Activated CD4-positive, alpha-beta T cell treated with anti-CD3 and anti-CD28 coated beads for 36 hours (primary cell): ENCODE measurements at regions of chr16 and their contacts with region 1.

Region 1: DNA sequence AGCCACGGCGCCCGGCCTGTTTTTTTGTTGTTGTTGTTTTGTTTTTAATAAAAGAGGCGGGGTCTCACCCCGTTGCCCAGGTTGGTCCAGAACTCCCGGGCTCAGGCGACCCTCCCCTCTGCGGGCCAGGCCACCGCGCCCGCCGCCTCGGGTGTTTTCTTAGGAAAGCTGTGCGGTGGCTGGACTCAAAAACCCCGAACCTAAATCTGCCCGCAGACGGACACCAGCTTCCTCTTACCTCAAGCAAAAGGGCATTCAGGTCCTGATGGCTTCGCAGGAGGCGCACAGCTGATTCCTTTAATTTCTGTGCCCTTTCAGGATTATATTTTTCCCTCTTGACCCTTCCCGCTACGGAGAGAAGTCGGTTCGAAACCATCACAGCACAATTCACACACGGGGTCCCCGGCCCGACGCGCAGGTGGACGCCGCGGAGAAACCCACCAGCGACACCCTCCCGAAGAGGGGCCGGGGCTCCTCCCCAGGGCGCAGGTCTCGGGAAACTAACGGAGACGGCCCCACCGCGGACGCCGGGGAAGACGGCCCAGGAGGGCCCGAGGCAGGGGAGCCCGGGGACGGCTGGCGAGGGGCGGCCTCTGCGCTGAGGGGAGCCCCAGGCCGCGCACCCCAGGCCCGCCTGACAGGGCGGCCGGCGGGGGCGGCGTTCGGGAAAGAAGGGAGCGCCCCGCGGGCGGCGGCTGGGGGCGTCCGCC is 653 bp downstream of the FANCA start:
- DNase-seq: peak; percentile 43
- ATAC-seq: peak; percentile 21
- H3K4me3 Mint-ChIP-seq: peak overlapping the region; percentile 89
- H3K27ac Mint-ChIP-seq: peak overlapping the region; percentile 67
- H3K4me1 Mint-ChIP-seq: peaks cover 44% of the 10 kb centered on the region
- H3K27me3 Mint-ChIP-seq: no peaks in the 10 kb centered on the region

Region 2: DNA sequence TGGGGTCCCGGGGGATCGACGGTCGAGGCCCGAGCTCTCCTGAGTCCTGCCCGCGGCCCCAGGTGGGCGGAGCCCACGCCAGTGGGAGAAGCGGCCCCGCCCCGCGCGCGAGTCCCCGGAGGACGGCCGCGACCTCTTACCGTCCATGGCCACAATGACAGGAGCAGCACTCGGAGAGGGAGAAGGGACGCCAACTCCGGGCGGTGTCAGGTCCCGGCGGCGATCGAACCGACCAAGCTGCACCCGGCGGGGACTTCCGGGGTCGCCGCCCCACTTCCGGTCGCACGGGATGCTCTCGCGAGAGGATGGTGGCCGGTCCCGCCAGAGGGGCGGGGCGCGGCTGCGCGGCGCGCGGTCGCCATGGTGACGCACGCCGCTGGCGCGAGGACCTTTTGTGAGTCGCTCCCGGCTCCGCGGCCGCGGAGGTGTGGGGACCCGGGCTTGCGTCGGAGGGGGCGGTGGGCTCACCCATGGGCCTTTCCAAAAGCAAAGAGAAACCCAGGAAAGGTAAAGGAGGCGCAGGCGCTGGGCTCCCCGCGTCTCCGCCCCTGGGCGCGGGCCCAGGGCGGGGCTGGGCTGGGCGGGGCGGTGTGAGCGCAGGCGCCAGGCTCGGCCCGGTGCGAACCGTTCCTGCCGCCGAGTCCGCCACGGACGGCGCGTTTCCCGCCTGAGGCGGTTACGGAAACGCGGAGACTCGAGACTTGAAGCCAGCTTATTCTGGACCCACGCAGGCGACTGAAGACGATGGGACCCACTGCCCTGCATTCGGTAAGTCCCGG is 158.2 kb before region 1 on chr16 and contains the starts of genes CHMP1A and SPATA33:
- CTCF ChIA-PET with region 1: no interaction called
- POLR2A ChIA-PET with region 1: no interaction called
- intact Hi-C with region 1: loop called in 1 of 2 experiments (anchors 1 kb)
- DNase-seq: peak; percentile 96
- ATAC-seq: peak; percentile 93
- H3K4me3 Mint-ChIP-seq: peak within 1 kb of the TSS; percentile 90
- H3K27ac Mint-ChIP-seq: peak within 1 kb of the TSS; percentile 83
- H3K4me1 Mint-ChIP-seq: peaks cover 28% of the 10 kb centered on the region
- H3K27me3 Mint-ChIP-seq: no peaks in the 10 kb centered on the region
- total RNA-seq, gene CHMP1A: 37.9 to 67.3 TPM
- total RNA-seq, gene SPATA33: 6.8 to 11.6 TPM

Region 3: DNA sequence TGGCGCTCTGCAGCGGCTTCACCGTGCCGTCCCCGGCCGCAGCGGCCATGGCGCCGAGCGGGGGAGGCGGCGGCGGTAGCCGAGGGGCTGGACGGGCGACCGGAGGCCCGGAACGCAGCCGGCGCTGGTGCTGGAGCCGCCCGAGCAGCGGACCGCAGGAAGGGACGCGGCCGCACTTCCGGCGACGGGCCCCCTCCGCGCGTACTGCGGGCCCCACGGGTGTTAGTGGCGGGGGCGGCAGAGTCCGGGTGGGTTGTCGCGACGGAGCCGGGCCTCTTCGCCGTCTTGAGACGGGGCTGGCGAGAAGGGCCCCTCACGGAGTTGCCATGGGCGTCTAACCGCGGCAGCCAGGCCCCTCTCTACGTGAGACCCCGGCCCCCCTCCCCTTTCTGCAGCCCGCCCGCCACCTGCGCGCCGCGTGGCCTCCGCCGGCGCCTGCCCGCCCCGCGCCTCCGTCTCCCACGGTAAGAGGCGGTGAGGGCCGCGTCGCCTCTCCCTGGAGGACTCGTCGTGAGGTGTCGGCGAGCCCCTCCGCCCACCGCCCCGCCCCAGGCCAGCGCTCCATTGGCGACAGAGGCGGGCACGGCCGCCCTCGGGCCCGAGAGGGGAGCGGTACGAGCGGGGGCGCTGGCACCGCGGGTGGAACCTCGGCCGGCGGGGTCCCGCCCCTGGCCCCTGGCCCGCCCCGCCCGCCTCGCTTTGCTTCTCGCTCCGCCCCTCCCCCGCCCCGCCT is 94.8 kb before region 1 on chr16 and contains the starts of genes VPS9D1 and ZNF276:
- CTCF ChIA-PET with region 1: no interaction called
- POLR2A ChIA-PET with region 1: no interaction called
- intact Hi-C with region 1: loop called (anchors 1 to 5 kb)
- DNase-seq: peak; percentile 92
- ATAC-seq: peak; percentile 49
- H3K4me3 Mint-ChIP-seq: peak within 1 kb of the TSS; percentile 85
- H3K27ac Mint-ChIP-seq: peak within 1 kb of the TSS; percentile 84
- H3K4me1 Mint-ChIP-seq: peaks cover 40% of the 10 kb centered on the region
- H3K27me3 Mint-ChIP-seq: no peaks in the 10 kb centered on the region
- total RNA-seq, gene VPS9D1: 2.0 to 2.6 TPM
- total RNA-seq, gene ZNF276: 21.3 to 24.8 TPM

Region 4: DNA sequence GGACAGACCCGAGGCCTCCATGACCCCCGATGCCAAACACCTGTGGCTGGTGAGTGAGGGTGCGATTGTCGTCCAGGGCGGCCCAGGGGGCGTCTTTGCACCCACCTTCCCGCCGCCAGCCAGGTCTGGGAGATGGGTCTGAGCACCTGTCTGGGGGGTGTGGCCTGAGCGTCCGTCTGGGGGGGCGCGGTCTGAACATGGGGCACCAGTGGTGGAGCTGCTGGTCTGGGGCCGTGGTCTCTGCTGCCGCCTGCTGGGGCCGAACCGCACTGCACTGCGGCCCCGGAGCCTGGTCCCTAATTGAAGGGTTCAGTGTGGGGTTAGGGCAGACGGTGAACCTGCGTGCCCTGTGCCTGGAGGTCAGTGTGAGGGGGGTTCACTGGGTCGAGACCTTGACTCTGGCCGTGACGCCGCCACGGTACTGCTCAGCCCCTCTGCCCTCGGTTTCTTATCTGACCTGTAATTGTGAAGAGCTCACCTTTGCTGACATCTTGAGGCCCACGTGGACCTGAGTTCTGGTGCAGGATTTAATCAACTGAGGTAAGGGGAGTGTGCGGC is 45.0 kb after region 1 on chr16:
- CTCF ChIA-PET with region 1: interaction called, 7 read pairs
- POLR2A ChIA-PET with region 1: no interaction called
- intact Hi-C with region 1: loop called in 1 of 2 experiments (anchors 2 kb)
- DNase-seq: peak; percentile 84
- ATAC-seq: peak; percentile 81
- H3K4me3 Mint-ChIP-seq: no peak overlapping the region
- H3K27ac Mint-ChIP-seq: no peak overlapping the region
- H3K4me1 Mint-ChIP-seq: peaks cover 28% of the 10 kb centered on the region
- H3K27me3 Mint-ChIP-seq: no peaks in the 10 kb centered on the region

Region 5: DNA sequence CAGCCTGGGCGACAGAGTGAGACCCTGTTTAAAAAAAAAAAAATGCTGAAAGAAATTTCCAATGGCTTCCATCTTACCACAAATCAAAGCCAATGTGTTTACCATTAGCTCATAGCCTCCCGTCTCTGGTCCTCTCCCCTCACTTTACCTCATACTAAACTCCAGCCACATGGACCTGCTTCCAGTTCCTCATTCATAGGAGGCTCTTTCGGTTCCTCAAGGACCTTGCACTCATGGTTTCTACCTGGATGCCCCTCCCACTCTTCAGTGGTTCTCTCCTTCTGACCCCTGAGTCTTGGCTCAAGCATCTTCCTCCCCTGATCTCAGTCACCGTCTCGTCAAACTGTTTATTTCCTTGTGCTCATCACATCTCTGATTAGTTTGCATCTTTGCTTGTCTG is 129.0 kb after region 1 on chr16:
- CTCF ChIA-PET with region 1: no interaction called
- POLR2A ChIA-PET with region 1: no interaction called
- intact Hi-C with region 1: no loop called
- DNase-seq: no peak
- ATAC-seq: no peak
- H3K4me3 Mint-ChIP-seq: no peak overlapping the region
- H3K27ac Mint-ChIP-seq: no peak overlapping the region
- H3K4me1 Mint-ChIP-seq: no peaks in the 10 kb centered on the region
- H3K27me3 Mint-ChIP-seq: peaks cover 20% of the 10 kb centered on the region

Region 6: DNA sequence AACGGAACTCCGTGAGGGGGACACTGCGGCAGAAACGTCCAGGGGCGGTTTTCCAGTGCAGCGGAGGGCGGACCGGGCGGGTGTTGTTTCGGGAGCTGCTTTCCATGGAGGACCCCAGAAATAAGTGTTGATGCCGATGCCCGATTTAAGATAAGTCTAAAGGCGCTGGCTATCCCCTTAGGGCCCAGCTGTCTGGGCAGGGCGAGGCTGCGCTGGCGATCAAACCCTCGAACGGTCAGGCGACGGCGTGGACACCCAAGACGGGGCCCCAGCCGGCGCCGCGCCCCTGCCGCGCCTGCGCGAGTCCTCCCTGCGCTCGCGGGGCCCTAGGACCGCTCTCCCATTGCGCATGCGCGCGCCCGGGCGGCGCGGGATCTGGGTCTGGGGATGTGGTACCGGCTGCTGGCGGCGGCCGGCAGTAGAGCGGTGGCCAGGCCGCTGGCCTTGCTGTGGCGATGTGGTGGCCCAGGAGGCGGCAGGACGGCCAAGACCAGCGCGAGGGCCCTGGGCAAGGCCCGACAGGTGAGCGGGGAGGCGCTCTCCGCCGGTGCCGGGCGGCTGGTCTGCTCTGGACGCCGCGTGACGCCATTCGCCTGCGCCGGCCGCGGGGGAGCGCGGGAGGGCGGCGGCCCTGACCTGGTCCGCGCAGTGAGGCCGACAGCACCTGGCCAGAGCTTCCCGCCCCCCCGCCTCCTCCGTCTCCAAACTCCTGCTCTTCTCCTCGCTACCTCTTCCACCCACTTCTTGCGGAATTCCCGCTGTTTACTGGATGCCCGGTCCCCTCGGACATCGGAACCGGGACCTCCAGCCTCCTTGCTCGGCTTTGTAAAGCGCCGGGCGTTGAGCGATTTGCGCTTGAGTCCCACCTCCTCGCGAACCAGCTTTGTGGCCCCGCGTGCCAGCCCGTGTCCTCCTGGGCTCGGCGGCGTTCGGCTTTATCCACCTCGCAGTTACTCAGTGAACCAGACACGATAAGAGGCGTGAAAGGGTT is 156.7 kb after region 1 on chr16:
- CTCF ChIA-PET with region 1: no interaction called
- POLR2A ChIA-PET with region 1: no interaction called
- intact Hi-C with region 1: loop called in 1 of 2 experiments (anchors 1 kb)
- DNase-seq: peak; percentile 94
- ATAC-seq: peak; percentile 94
- H3K4me3 Mint-ChIP-seq: peak overlapping the region; percentile 99
- H3K27ac Mint-ChIP-seq: peak overlapping the region; percentile 95
- H3K4me1 Mint-ChIP-seq: peaks cover 32% of the 10 kb centered on the region
- H3K27me3 Mint-ChIP-seq: no peaks in the 10 kb centered on the region